ENCODE measurements at regions of chr4 and their contacts with region 1.

Region 1: GRCh38 chr4:63901304-63901703 is 507.9 kb downstream of the TECRL start:
- DNase-seq: no peak
- ATAC-seq: no peak
- H3K4me3 ChIP-seq: no peak overlapping the region
- H3K27ac ChIP-seq: no peak overlapping the region
- H3K4me1 ChIP-seq: no peaks in the 10 kb centered on the region
- H3K27me3 ChIP-seq: no peaks in the 10 kb centered on the region
- CTCF ChIP-seq: no peak

Region 2: GRCh38 chr4:63036159-63036866 is 865.0 kb before region 1 on chr4:
- intact Hi-C with region 1: no loop called
- DNase-seq: no peak
- ATAC-seq: no peak
- H3K4me3 ChIP-seq: no peak overlapping the region
- H3K27ac ChIP-seq: no peak overlapping the region
- H3K4me1 ChIP-seq: no peaks in the 10 kb centered on the region
- H3K27me3 ChIP-seq: no peaks in the 10 kb centered on the region
- CTCF ChIP-seq: no peak

Region 3: GRCh38 chr4:63742882-63743281 is 158.4 kb before region 1 on chr4:
- intact Hi-C with region 1: no loop called
- DNase-seq: no peak
- ATAC-seq: no peak
- H3K4me3 ChIP-seq: no peak overlapping the region
- H3K27ac ChIP-seq: no peak overlapping the region
- H3K4me1 ChIP-seq: no peaks in the 10 kb centered on the region
- H3K27me3 ChIP-seq: no peaks in the 10 kb centered on the region
- CTCF ChIP-seq: no peak

Region 4: GRCh38 chr4:63814171-63814964 is 86.9 kb before region 1 on chr4:
- intact Hi-C with region 1: loop called in 1 of 3 experiments (anchors 10 kb)
- DNase-seq: peak in 1 of 6 donors; percentile 25
- ATAC-seq: no peak
- H3K4me3 ChIP-seq: no peak overlapping the region
- H3K27ac ChIP-seq: no peak overlapping the region
- H3K4me1 ChIP-seq: no peaks in the 10 kb centered on the region
- H3K27me3 ChIP-seq: no peaks in the 10 kb centered on the region
- CTCF ChIP-seq: no peak

Measured in pancreas (tissue), 10 donors.